PC-3 (cell line): ENCODE measurements at regions of chr4 and their contacts with region 1.

Region 1: GRCh38 chr4:35250761-35251160 is 993.6 kb downstream of the ARAP2 start:
- DNase-seq: peak; percentile 57
- ATAC-seq: no peak
- H3K4me3 ChIP-seq: no peak overlapping the region
- H3K27ac ChIP-seq: no peak overlapping the region
- H3K4me1 ChIP-seq: peaks cover 49% of the 10 kb centered on the region
- H3K27me3 ChIP-seq: no peaks in the 10 kb centered on the region
- CTCF ChIP-seq: no peak

Region 2: DNA sequence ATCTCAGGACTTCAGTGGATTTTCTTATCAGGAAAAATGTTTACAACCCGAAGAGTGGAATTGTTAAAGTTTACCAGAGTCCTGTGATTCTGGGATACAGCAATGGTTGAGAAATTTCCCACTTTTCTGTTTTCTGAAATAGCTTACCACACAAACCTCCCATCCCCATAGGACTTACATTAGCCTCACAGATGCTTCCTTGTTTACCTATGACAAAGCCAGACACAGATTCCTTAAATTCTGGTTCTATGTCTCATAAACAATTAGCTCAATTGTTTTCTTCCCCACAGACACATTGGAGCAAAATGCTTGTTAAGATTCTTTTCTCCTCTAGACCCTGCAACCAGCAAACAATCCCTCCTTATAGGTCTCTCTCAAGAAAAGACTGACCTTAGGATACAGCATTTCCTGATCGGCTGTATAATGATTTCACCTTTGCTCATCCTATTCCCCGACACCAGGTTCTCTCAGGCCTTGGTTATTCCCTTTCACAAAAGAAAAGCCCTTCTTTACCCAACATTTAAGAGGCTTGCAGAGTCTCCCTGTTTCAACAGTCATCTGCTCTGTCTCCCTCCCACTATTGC is 107.3 kb after region 1 on chr4:
- CTCF ChIA-PET with region 1: no interaction called
- POLR2A ChIA-PET with region 1: no interaction called
- intact Hi-C with region 1: loop called (anchors 5 kb)
- DNase-seq: peak; percentile 55
- ATAC-seq: peak; percentile 86
- H3K4me3 ChIP-seq: peak overlapping the region; percentile 50
- H3K27ac ChIP-seq: 0 out of 2 replicates have a peak overlapping the region, but pooled peaks have one; percentile 14
- H3K4me1 ChIP-seq: peaks cover 4% of the 10 kb centered on the region; the same call in 1 of the 2 replicates
- H3K27me3 ChIP-seq: no peaks in the 10 kb centered on the region
- CTCF ChIP-seq: no peak

Region 3: GRCh38 chr4:35559559-35560365 is 309.0 kb after region 1 on chr4:
- CTCF ChIA-PET with region 1: no interaction called
- POLR2A ChIA-PET with region 1: no interaction called
- intact Hi-C with region 1: loop called (anchors 5 kb)
- DNase-seq: no peak
- ATAC-seq: no peak
- H3K4me3 ChIP-seq: no peak overlapping the region
- H3K27ac ChIP-seq: no peak overlapping the region
- H3K4me1 ChIP-seq: 0 out of 2 replicates have a peak, but pooled peaks cover 3% of the 10 kb centered on the region
- H3K27me3 ChIP-seq: no peaks in the 10 kb centered on the region
- CTCF ChIP-seq: no peak